ENCODE measurements at regions of chr7 and their contacts with region 1.

Region 1: GRCh38 chr7:49243521-49243920 is 319.2 kb downstream of the CDC14C start:
- DNase-seq: no peak
- H3K4me3 ChIP-seq: no peak overlapping the region; a peak in 1 of 8 replicates
- H3K27ac ChIP-seq: no peak overlapping the region
- H3K4me1 ChIP-seq: peaks cover 0 to 24% (median 21%) of the 10 kb centered on the region in 4 experiments
- H3K27me3 ChIP-seq: no peaks in the 10 kb centered on the region
- CTCF ChIP-seq: peak in 2 of 3 experiments; percentile 12 to 49; a peak in 2 of 4 replicates
- EP300 ChIP-seq: no peak
- POLR2A ChIP-seq: no peak
- RAD21 ChIP-seq: peak; percentile 59 to 64

Region 2: GRCh38 chr7:49099587-49100326 is 143.8 kb before region 1 on chr7:
- CTCF ChIA-PET with region 1: interaction called, 10 read pairs
- POLR2A ChIA-PET with region 1: interaction called, 3 read pairs
- DNase-seq: no peak
- H3K4me3 ChIP-seq: no peak overlapping the region
- H3K27ac ChIP-seq: peak overlapping the region; percentile 73
- H3K4me1 ChIP-seq: peaks cover 3 to 32% (median 10%) of the 10 kb centered on the region in 4 experiments; a peak in 5 of 7 replicates
- H3K27me3 ChIP-seq: no peaks in the 10 kb centered on the region
- CTCF ChIP-seq: peak in 2 of 3 experiments; percentile 25 to 45; a peak in 2 of 4 replicates
- EP300 ChIP-seq: no peak
- POLR2A ChIP-seq: no peak
- RAD21 ChIP-seq: peak; percentile 53 to 63